ENCODE measurements at regions of chr15 and their contacts with region 1.

Region 1: GRCh38 chr15:76987926-76988860 is 6.7 kb upstream of the PSTPIP1 start:
- H3K4me3 Mint-ChIP-seq: peak overlapping the region; percentile 27
- H3K27ac Mint-ChIP-seq: peak overlapping the region; percentile 92
- H3K4me1 Mint-ChIP-seq: peaks cover 93% of the 10 kb centered on the region
- H3K27me3 Mint-ChIP-seq: no peaks in the 10 kb centered on the region

Region 2: GRCh38 chr15:76815401-76815800 is 172.8 kb before region 1 on chr15:
- intact Hi-C with region 1: no loop called
- H3K4me3 Mint-ChIP-seq: no peak overlapping the region
- H3K27ac Mint-ChIP-seq: no peak overlapping the region
- H3K4me1 Mint-ChIP-seq: peaks cover 5% of the 10 kb centered on the region
- H3K27me3 Mint-ChIP-seq: no peaks in the 10 kb centered on the region

Region 3: GRCh38 chr15:76931397-76932007 is 56.7 kb before region 1 on chr15 and contains the start of gene RCN2:
- intact Hi-C with region 1: no loop called
- H3K4me3 Mint-ChIP-seq: peak within 1 kb of the TSS; percentile 80
- H3K27ac Mint-ChIP-seq: peak within 1 kb of the TSS; percentile 75
- H3K4me1 Mint-ChIP-seq: peaks cover 10% of the 10 kb centered on the region
- H3K27me3 Mint-ChIP-seq: no peaks in the 10 kb centered on the region

Region 4: DNA sequence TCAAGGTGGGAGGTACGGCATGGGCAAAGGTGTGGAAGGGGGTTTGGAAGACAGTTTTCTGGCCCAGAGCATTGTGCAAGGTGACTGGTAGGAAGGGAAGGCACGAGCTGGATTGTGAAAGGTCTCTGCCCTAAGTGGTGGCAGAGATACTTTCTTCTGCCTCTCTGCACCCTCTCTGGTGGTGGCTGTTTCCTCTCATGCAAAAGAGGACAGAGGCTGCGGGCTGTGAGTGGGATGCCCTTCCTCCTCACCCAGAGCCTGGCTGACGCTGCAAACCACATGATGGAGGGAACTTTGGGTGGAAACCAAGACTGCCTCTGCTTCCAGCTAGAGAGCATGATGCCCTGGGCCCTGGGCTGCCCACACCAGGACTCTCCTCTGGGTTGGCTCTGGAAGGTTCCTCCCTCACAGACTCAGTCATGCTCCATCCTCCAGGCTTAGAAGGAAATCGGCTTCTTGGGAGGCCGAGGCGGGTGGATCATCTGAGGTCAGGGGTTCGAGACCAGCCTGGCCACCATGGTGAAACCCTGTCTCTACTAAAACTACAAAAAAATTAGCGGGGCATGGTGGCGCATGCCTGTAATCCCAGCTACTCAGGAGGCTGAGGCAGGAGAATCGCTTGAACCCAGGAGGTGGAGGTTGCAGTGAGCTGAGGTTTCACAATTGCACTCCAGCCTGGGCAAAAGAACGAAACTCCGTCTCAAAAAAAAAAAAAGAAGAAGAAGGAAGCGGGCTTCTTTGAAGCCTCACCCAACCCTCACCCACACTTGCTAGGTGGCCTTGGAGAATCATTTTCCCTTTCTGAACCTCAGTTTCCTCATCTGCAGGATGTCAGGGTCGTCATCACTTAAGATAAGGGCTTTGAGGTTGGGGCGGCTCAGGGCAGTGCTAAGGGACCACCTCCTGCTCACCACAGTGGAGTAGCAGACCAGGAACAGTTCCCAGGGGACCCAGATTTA is 15.0 kb after region 1 on chr15:
- intact Hi-C with region 1: loop called (anchors 2 kb)
- H3K4me3 Mint-ChIP-seq: peak overlapping the region; percentile 52
- H3K27ac Mint-ChIP-seq: peak overlapping the region; percentile 87
- H3K4me1 Mint-ChIP-seq: peaks cover 74% of the 10 kb centered on the region
- H3K27me3 Mint-ChIP-seq: no peaks in the 10 kb centered on the region

Region 5: GRCh38 chr15:77044228-77045042 is 56.2 kb after region 1 on chr15:
- intact Hi-C with region 1: no loop called
- H3K4me3 Mint-ChIP-seq: no peak overlapping the region
- H3K27ac Mint-ChIP-seq: no peak overlapping the region
- H3K4me1 Mint-ChIP-seq: peaks cover 28% of the 10 kb centered on the region
- H3K27me3 Mint-ChIP-seq: no peaks in the 10 kb centered on the region

Measured in dendritic cell treated with granulocyte-macrophage colony-stimulating factor and Interleukin-4, amounts not matched to agents 40 ng/mL and 50 ng/mL, for 4 days (primary cell).